Dendritic cell treated with granulocyte-macrophage colony-stimulating factor and Interleukin-4, amounts not matched to agents 40 ng/mL and 50 ng/mL, for 4 days (primary cell): ENCODE measurements at regions of chr14 and their contacts with region 1.

Region 1: GRCh38 chr14:105490572-105491366 is at the start of gene TEDC1:
- H3K4me3 Mint-ChIP-seq: peak within 1 kb of the TSS; percentile 72
- H3K27ac Mint-ChIP-seq: peak within 1 kb of the TSS; percentile 100
- H3K4me1 Mint-ChIP-seq: peaks cover 45% of the 10 kb centered on the region
- H3K27me3 Mint-ChIP-seq: peaks cover 12% of the 10 kb centered on the region

Region 2: DNA sequence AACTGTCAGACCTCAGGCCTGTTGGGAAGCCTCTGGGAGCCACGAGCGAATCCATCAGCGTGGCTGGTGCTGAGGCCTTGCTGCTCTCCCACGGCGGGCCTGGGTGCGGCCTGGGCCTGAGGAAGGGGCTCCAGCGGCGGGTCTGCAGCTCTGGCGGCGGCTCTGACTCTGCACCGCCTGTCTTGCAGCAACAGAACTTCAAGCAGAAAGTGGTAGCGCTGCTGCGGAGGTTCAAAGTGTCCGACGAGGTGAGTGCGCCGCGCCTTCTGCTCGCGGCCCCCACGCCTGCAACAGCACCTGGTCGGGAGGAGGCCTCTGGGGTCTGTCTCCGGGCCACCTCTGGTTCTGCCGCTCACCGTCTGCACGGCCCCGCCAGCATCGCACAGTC is 121.1 kb before region 1 on chr14:
- intact Hi-C with region 1: loop called (anchors 1 kb)
- H3K4me3 Mint-ChIP-seq: no peak overlapping the region
- H3K27ac Mint-ChIP-seq: no peak overlapping the region
- H3K4me1 Mint-ChIP-seq: peaks cover 13% of the 10 kb centered on the region
- H3K27me3 Mint-ChIP-seq: no peaks in the 10 kb centered on the region

Region 3: DNA sequence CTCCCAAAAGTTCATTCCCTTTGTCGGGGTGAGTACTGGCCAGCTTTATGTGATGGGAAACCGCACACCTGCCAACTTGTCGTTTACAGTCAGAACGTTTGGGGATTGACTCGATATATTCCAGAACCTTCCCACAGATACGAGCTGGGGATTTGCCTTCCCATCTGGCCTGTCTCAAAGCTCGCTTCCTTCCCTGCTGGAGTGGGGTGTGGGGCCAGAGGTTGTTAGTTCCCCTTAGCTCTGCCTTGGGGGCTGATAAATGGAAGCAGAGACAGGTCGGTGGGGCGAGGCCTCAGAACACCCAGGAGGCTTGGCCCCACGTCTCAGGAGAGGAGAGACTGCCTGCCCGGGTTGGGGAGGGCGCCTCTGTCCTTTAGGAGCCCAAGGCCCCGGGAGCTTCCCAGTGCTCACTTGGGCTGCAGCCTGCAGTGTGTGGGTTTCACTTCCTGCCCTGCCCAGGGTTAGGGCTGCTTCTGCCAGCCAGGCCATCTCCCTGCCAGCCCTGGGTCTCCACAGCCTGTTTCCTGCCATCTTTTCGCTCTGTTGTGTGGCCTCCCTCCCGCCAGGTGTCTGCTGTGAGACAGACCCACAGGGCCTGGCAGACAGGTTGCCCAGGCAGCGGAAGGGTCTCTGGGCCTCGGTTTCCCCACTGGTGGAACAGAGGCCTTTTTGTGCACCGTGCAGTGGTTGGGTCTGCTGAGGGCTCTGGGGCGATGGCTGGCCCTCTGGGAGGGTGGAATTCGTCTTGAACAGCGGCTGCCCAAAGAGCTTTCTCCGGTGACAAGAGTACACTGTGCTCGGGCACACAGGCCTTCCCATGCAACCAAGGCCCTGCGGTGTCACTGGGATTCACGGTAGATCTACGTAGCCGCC is 100.6 kb before region 1 on chr14:
- intact Hi-C with region 1: loop called (anchors 5 kb)
- H3K4me3 Mint-ChIP-seq: peak overlapping the region; percentile 66
- H3K27ac Mint-ChIP-seq: peak overlapping the region; percentile 95
- H3K4me1 Mint-ChIP-seq: peaks cover 100% of the 10 kb centered on the region
- H3K27me3 Mint-ChIP-seq: no peaks in the 10 kb centered on the region

Region 4: GRCh38 chr14:105414456-105415371 is 76.1 kb before region 1 on chr14:
- intact Hi-C with region 1: loop called (anchors 2 kb)
- H3K4me3 Mint-ChIP-seq: peak overlapping the region; percentile 63
- H3K27ac Mint-ChIP-seq: peak overlapping the region; percentile 63
- H3K4me1 Mint-ChIP-seq: peaks cover 38% of the 10 kb centered on the region
- H3K27me3 Mint-ChIP-seq: peaks cover 64% of the 10 kb centered on the region

Region 5: DNA sequence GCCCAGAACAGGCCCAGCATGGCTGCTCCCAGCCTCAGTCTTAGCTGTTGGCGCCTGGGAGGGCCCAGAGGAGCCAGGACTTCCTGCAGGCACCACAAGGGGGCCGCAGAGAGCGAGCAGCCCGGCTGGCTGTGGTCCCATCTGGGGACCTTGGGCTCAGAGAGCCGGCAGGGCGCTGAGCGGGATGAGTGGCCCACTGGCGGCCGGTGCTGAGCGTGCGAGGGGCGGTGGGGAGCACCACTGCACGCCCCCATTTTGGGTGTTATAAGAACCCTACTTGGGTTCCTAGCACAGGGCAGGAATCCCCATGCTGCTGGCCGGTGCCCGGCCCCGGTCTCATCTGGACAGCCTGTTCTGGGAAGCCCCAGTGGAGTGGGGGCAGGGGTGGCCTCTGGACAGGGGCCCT is 42.1 kb before region 1 on chr14:
- intact Hi-C with region 1: loop called (anchors 2 kb)
- H3K4me3 Mint-ChIP-seq: no peak overlapping the region
- H3K27ac Mint-ChIP-seq: no peak overlapping the region
- H3K4me1 Mint-ChIP-seq: no peaks in the 10 kb centered on the region
- H3K27me3 Mint-ChIP-seq: no peaks in the 10 kb centered on the region

Region 6: DNA sequence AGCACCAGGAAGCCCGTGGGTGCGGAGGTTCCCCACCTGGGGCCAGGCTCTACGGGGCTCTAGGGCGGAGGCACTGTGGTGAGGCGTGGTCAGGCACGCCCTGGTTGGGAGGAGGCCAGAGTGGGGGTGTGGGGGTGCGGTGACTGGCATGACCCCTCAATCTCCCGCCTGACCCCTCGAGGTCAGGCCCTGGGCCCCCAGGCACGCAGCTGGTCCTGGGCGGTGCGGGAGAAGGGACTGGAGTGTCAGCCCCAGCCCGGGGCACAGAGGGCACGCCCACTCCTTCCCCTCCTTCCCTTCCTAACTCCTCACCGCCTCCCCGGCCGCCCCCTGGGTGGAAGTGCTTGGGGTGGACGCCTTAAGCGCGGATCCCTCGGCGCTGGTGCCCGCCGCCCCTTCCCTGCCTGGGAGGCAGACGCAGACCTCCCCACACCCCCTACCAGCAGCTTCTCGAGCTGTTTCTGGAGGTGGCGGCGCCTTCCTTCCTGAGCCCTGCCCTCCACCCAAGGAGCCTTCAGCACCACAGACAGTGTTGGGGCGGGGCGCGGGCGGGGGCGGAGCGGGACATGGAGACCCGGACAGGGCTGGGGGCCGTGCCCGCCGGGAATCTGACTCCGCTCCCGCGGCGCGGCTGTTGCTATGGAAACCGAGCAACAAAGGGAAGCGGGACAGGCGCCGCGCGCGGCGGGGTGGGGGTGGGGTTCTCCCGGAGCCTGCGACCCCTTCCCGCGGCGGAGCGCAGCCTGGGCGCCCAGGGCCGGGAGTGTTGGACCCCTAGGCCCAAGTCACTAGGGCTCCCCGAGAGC is 16.9 kb before region 1 on chr14:
- intact Hi-C with region 1: loop called (anchors 2 kb)
- H3K4me3 Mint-ChIP-seq: peak overlapping the region; percentile 78
- H3K27ac Mint-ChIP-seq: no peak overlapping the region
- H3K4me1 Mint-ChIP-seq: peaks cover 31% of the 10 kb centered on the region
- H3K27me3 Mint-ChIP-seq: peaks cover 50% of the 10 kb centered on the region

Region 7: GRCh38 chr14:105527661-105528581 is 37.2 kb after region 1 on chr14:
- intact Hi-C with region 1: loop called (anchors 5 kb)
- H3K4me3 Mint-ChIP-seq: peak overlapping the region; percentile 80
- H3K27ac Mint-ChIP-seq: peak overlapping the region; percentile 73
- H3K4me1 Mint-ChIP-seq: peaks cover 28% of the 10 kb centered on the region
- H3K27me3 Mint-ChIP-seq: peaks cover 76% of the 10 kb centered on the region